Activated CD4-positive, alpha-beta T cell treated with anti-CD3 and anti-CD28 coated beads for 36 hours (primary cell): ENCODE measurements at regions of chr19 and their contacts with region 1.

Region 1: GRCh38 chr19:58002384-58003173 is at the start of gene ZNF606:
- DNase-seq: peak; percentile 93
- ATAC-seq: peak; percentile 99
- H3K4me3 Mint-ChIP-seq: peak within 1 kb of the TSS; percentile 80
- H3K27ac Mint-ChIP-seq: peak within 1 kb of the TSS; percentile 86
- H3K4me1 Mint-ChIP-seq: peaks cover 29% of the 10 kb centered on the region
- H3K27me3 Mint-ChIP-seq: no peaks in the 10 kb centered on the region
- total RNA-seq, gene ZNF606: 6.0 to 8.9 TPM

Region 2: DNA sequence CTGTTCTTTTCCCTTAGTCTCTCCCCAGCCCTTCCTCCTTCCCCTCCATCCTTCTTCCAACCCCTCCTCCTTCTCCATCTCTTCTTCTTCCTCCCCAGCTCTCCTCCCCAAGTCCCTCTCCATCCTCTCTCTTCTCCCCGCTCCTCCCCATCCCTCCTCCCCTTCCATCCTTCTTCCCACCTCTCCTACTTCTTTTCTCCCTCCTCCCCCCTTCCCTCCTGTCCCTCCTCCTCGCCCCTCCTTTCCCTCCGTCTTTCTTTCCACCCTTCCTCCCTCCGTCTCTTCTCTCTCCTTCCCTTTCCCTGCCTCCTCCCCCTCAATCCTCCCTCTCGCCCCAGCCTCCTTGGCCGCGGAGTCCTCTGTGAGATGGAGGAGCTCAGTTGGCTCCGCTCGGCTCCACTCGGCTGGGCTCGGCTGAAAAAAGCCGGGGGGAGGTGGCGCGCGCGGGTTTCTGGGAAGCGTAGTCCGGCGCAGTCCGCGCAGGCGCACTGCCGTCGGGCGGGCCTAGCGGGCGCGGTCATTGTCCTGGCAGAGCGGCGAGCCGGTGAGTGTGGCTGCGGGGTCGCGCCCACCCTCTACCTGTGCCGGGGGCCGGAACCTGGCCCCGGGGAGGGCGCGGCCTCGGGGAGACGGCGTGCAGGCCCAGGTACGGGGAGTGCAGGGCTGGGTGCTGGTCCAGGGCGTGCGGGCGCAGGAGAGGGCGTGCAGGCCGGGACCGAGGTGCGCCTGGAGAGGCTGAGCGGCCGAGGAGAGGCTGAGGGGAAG is 1407.6 kb before region 1 on chr19 and contains the start of gene ZNF71:
- CTCF ChIA-PET with region 1: no interaction called
- POLR2A ChIA-PET with region 1: no interaction called
- intact Hi-C with region 1: loop called in 1 of 2 experiments (anchors 1 kb)
- DNase-seq: peak; percentile 94
- ATAC-seq: peak; percentile 98
- H3K4me3 Mint-ChIP-seq: peak within 1 kb of the TSS; percentile 87
- H3K27ac Mint-ChIP-seq: peak within 1 kb of the TSS; percentile 71
- H3K4me1 Mint-ChIP-seq: peaks cover 19% of the 10 kb centered on the region
- H3K27me3 Mint-ChIP-seq: no peaks in the 10 kb centered on the region
- total RNA-seq, gene ZNF71: 4.4 to 4.6 TPM

Region 3: GRCh38 chr19:57719901-57720519 is 282.6 kb before region 1 on chr19:
- CTCF ChIA-PET with region 1: no interaction called
- POLR2A ChIA-PET with region 1: no interaction called
- intact Hi-C with region 1: loop called in 1 of 2 experiments (anchors 5 kb)
- DNase-seq: no peak
- ATAC-seq: no peak
- H3K4me3 Mint-ChIP-seq: no peak overlapping the region
- H3K27ac Mint-ChIP-seq: no peak overlapping the region
- H3K4me1 Mint-ChIP-seq: peaks cover 4% of the 10 kb centered on the region
- H3K27me3 Mint-ChIP-seq: no peaks in the 10 kb centered on the region

Region 4: DNA sequence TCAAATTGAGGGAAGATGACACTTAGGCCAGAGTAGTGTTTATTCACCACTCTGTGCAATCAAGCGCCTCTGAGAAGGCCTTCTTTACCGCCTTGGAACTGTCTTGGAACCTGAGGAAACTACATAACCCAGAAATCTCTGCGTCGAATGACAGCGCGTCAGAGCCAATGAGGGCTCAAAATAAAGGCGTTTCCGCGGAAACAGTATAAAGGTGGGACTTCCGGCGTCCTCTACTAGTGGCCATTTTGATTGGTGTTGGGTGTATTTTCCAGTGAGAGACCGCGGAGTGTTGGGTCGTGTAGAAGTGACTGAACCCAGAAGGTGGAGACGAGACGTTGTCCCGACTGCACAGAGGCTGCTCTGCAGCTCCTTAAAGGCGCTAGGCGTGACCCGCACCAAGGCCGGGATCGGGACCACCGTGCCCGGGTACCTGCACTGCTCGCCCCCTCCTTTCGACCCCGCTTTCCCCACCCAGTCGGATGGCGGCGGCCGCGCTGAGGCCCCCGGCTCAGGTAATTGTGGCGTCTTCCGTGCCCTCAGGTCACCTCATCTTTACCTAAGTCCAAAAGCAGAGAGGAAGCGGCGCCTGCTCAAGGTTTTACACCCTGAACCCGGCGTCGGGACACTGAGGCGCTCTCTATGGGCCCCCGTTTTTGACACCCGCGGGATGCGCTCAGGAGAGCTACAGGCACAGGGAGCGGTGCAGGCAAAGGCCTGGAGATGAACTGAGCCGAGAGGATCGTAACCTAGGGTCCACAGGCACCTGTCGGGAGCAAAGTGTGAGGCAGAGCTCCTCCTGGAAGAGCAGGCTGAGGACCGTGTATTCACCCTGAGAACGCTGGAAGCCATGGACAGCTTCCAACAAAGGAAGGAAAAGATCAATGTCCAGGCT is 255.8 kb before region 1 on chr19 and contains the start of gene ZNF776:
- CTCF ChIA-PET with region 1: no interaction called
- POLR2A ChIA-PET with region 1: no interaction called
- intact Hi-C with region 1: loop called in 1 of 2 experiments (anchors 1 kb)
- DNase-seq: peak; percentile 89
- ATAC-seq: peak; percentile 98
- H3K4me3 Mint-ChIP-seq: peak within 1 kb of the TSS; percentile 93
- H3K27ac Mint-ChIP-seq: peak within 1 kb of the TSS; percentile 98
- H3K4me1 Mint-ChIP-seq: peaks cover 15% of the 10 kb centered on the region
- H3K27me3 Mint-ChIP-seq: no peaks in the 10 kb centered on the region
- total RNA-seq, gene ZNF776: 8.9 to 14.7 TPM

Region 5: DNA sequence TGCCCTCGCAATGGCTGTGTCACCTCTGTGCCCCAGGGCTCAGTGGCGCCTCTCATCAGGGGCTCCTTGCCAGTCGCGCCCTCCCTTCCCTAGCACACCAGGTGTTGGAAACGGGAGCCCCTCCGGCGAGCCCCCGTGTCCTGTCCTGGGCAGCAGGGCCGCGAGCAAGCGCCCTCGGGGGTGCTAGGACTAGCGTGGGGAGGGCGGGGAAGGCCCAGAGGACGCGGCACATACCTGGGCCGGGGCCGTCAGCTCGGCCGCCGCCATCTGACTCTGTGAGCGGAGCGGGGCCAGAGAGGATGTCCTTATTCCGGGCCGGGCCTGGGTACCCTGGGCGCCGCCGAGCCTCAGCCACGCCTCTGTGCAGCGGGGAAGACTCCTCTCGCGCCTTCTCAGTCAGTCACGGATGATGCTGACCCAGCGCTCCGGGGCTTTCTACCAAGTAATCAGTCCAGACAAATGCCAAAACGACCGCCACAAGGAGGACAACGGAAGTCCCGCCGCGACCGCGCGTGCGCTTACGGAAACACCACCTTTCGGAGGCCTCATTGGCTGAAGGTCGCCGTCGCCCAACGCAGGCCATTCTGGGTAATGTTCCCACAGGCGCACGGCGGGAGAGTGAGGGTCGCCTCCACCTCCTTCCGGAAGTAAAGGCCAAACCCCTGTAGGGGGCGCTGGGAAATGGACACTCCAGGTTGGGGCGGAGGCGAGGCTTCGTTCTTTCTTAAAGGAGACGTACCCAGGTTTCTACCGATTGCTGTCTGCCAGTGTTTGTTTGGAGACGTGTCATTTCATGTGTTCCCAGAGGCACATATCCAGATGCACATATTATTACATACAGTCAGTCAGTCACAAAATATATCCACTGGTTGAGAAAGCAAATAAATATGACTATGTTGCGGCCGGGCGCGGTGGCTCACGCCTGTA is 55.1 kb before region 1 on chr19 and contains the start of gene ZNF256:
- CTCF ChIA-PET with region 1: no interaction called
- POLR2A ChIA-PET with region 1: no interaction called
- intact Hi-C with region 1: loop called (anchors 1 kb)
- DNase-seq: peak; percentile 95
- ATAC-seq: peak; percentile 99
- H3K4me3 Mint-ChIP-seq: peak within 1 kb of the TSS; percentile 87
- H3K27ac Mint-ChIP-seq: peak within 1 kb of the TSS; percentile 90
- H3K4me1 Mint-ChIP-seq: peaks cover 16% of the 10 kb centered on the region
- H3K27me3 Mint-ChIP-seq: no peaks in the 10 kb centered on the region
- total RNA-seq, gene ZNF256: 6.3 to 6.9 TPM

Region 6: DNA sequence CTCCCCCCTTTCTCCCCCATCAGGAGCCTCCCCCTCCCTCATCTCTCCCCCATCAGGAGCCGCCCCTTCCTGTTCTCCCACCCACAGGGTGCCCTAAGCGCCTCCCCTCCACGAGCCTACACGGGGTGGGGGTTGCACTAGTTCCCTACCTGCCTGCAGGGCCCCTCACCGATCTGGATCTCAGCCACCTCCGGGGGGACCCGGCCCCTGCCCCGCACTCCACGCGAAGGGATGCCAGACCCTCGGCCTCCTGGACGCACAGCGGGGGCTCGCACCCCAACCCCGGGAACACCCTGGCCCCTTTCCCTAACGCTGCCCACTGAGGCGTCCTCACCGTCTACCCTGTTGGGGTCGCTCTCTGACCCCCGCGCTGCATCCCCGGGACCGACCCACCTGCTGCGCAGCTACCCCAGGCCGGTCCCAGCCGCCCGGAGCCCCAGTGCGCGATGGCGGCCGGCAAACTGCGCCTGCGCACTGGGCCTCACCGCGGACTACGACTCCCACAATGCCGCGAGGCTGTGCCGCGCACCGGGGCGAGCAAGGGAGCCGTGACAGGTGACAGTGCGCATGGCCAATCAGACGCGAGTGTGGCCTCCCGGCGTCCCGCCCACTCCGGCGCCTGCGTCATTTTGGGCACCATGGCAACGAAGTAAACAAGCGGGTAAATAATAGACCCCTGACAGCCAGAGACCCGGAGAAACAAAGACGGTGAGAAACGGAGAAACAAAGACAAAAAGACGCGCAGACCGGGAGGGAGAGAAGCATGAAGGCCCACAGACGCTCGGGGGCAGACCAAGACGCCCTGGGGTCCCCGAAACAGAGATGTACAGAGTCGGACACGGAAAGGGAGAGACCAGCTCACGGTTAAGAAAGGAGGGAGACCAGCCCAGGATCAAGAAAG is 95.5 kb after region 1 on chr19 and contains the start of gene ZSCAN18:
- CTCF ChIA-PET with region 1: no interaction called
- POLR2A ChIA-PET with region 1: no interaction called
- intact Hi-C with region 1: loop called in 1 of 2 experiments (anchors 1 kb)
- DNase-seq: peak; percentile 97
- ATAC-seq: peak; percentile 99
- H3K4me3 Mint-ChIP-seq: peak within 1 kb of the TSS; percentile 82
- H3K27ac Mint-ChIP-seq: peak within 1 kb of the TSS; percentile 97
- H3K4me1 Mint-ChIP-seq: peaks cover 13% of the 10 kb centered on the region
- H3K27me3 Mint-ChIP-seq: no peaks in the 10 kb centered on the region
- total RNA-seq, gene ZSCAN18: 23.1 to 29.2 TPM

Region 7: GRCh38 chr19:58386576-58387337 is 384.2 kb after region 1 on chr19 and contains the start of gene RPS5:
- CTCF ChIA-PET with region 1: no interaction called
- POLR2A ChIA-PET with region 1: no interaction called
- intact Hi-C with region 1: loop called in 1 of 2 experiments (anchors 1 kb)
- DNase-seq: peak; percentile 97
- ATAC-seq: peak; percentile 96
- H3K4me3 Mint-ChIP-seq: peak within 1 kb of the TSS; percentile 96
- H3K27ac Mint-ChIP-seq: peak within 1 kb of the TSS; percentile 97
- H3K4me1 Mint-ChIP-seq: peaks cover 33% of the 10 kb centered on the region
- H3K27me3 Mint-ChIP-seq: no peaks in the 10 kb centered on the region
- total RNA-seq, gene RPS5: 1,234 to 1,535 TPM